ENCODE measurements at regions of chr17 and their contacts with region 1.

Region 1: GRCh38 chr17:30104575-30105339 is 11.9 kb upstream of the NSRP1 start:
- DNase-seq: peak; percentile 84
- ATAC-seq: peak; percentile 94
- H3K4me3 Mint-ChIP-seq: peak overlapping the region; percentile 75
- H3K27ac Mint-ChIP-seq: peak overlapping the region; percentile 3
- H3K4me1 Mint-ChIP-seq: peaks cover 8% of the 10 kb centered on the region
- H3K27me3 Mint-ChIP-seq: peaks cover 26% of the 10 kb centered on the region

Region 2: DNA sequence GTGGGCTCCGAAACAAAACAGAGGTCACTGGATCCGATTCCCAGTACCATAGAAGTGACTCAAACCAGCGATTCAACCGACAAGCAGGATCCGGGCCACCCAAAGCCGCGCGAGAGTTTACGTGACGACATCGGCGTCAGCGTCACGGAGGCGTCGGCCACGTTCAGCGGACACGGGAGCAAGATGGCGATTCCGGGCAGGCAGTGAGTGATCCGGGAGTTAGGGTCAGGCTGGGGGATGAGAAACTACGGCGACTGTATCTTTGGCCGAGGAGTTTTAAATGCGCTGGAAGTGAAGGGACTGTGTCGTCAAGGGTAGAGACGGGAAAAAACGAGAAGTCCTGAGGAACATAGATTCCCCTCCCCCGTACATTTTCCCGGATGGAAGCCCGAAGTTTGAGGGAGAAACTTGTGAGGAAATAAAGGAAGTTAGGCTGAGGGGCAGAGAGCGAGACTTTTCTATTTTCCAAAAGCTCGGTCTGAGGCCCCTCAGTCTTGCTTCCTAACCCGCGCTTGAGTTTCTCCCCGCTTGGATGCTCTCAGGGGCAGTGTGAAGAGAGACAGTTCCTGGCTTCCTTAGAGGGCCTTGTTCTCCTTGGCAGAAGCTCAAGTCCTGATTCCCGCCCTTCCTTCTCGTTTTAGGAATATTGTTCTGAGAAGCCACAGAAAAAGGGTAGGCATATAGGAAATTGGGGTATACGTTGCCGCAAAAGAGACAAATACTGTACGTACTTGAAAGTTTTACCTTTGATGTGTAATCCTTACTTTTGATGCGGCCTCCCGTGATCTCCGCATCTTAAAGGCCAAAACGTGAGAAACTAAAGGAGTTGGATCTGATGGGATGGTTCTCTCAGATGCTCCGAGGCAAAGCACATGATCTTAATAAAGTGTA is 12.1 kb after region 1 on chr17 and contains the start of gene NSRP1:
- CTCF ChIA-PET with region 1: interaction called, 56 read pairs
- DNase-seq: peak; percentile 97
- ATAC-seq: peak; percentile 91
- H3K4me3 Mint-ChIP-seq: peak within 1 kb of the TSS; percentile 99
- H3K27ac Mint-ChIP-seq: peak within 1 kb of the TSS; percentile 99
- H3K4me1 Mint-ChIP-seq: peaks cover 62% of the 10 kb centered on the region
- H3K27me3 Mint-ChIP-seq: no peaks in the 10 kb centered on the region
- total RNA-seq, gene NSRP1: 24.0 to 30.9 TPM

Region 3: GRCh38 chr17:30236766-30237165 is 132.0 kb after region 1 on chr17:
- CTCF ChIA-PET with region 1: interaction called, 21 read pairs
- DNase-seq: no peak
- ATAC-seq: peak; percentile 47
- H3K4me3 Mint-ChIP-seq: peak overlapping the region; percentile 44
- H3K27ac Mint-ChIP-seq: no peak overlapping the region
- H3K4me1 Mint-ChIP-seq: peaks cover 27% of the 10 kb centered on the region
- H3K27me3 Mint-ChIP-seq: peaks cover 65% of the 10 kb centered on the region

Region 4: DNA sequence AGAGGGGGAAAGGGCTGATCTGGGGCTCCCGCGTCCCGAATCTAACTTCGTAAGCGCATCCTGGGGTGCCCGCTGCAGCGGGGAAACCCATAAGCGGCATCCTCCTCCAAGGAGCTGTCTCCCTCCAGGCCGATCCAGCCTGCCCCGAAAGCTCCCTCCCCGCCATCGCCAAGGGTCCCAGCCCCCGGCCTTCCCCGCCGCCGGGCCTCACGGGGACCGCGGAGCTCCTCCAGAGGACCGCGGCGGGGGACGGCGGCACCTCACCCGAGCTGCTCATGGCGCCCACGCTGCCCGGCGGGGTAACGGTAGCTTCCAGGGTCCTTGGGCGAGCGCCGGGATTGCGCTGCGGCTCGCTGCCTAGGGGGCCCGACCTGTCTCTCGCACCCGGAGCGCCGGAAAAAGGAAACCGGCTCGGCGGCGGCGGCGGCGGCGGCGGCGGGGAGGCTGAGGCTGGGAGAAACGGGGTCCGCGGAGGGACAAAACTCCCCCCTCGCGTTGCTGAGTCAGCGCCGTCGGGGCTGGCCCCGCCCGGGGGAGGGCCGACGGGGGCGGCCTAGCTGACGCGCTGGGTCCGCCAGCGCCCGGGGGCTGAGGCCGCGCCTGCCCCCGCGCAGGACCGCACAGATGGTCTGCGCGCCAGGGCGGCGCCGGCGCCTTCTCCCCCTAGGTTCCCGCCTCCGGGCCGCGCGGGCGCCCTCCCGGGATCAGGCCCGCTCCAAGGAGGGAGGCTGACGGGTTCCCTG is 187.0 kb after region 1 on chr17 and contains the start of gene BLMH:
- CTCF ChIA-PET with region 1: interaction called, 10 read pairs
- DNase-seq: peak; percentile 88
- ATAC-seq: peak; percentile 92
- H3K4me3 Mint-ChIP-seq: peak within 1 kb of the TSS; percentile 98
- H3K27ac Mint-ChIP-seq: peak within 1 kb of the TSS; percentile 90
- H3K4me1 Mint-ChIP-seq: peaks cover 22% of the 10 kb centered on the region
- H3K27me3 Mint-ChIP-seq: no peaks in the 10 kb centered on the region
- total RNA-seq, gene BLMH: 68.0 to 70.5 TPM